GM10248 (cell line): ENCODE measurements at regions of chr10 and their contacts with region 1.

Region 1: DNA sequence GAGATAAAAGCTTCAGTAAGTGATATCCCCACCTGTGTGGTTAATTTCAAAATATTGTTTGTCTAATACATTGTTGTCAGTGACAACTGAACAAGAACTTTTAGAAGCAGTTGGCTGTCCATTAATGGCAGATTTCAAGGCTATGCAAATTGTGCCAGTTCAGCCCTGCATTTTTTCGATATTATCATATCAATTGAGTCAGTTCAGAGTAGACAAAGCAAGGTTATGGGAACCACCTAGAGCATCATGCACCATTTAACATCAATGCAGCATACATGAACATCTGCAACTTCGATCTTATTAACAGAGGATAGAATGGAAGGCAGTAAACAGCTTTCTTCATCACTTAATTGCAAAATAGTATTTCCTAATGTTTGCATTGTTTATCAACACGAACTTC is 180.7 kb upstream of the KAT6B start:
- DNase-seq: no peak
- CTCF ChIP-seq: no peak

Region 2: DNA sequence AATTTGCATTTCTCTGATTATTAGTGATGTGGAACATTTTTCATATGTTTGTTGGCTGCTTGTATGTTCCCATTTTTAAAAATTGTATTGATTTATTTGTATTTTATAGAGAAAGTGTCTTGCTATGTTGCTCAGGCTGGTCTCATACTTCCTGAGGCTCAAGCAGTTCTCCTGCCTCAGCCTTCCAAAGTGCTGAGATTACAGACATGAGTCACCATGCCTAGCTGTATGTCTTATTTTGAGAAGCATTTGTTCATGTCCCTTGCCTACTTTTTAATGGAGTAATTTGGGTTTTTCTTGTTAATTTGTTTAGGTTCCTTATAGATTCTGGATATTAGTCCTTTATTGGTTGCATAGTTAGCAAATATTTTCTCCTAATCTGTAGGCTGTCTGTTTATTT is 33.5 kb before region 1 on chr10:
- CTCF ChIA-PET with region 1: no interaction called
- POLR2A ChIA-PET with region 1: no interaction called
- DNase-seq: no peak
- CTCF ChIP-seq: no peak

Region 3: GRCh38 chr10:74662635-74663034 is 16.9 kb after region 1 on chr10:
- CTCF ChIA-PET with region 1: interaction called, 13 read pairs
- POLR2A ChIA-PET with region 1: no interaction called
- DNase-seq: no peak
- CTCF ChIP-seq: no peak